Left cardiac atrium (tissue), 4 donors: ENCODE measurements at regions of chr16 and their contacts with region 1.

Region 1: DNA sequence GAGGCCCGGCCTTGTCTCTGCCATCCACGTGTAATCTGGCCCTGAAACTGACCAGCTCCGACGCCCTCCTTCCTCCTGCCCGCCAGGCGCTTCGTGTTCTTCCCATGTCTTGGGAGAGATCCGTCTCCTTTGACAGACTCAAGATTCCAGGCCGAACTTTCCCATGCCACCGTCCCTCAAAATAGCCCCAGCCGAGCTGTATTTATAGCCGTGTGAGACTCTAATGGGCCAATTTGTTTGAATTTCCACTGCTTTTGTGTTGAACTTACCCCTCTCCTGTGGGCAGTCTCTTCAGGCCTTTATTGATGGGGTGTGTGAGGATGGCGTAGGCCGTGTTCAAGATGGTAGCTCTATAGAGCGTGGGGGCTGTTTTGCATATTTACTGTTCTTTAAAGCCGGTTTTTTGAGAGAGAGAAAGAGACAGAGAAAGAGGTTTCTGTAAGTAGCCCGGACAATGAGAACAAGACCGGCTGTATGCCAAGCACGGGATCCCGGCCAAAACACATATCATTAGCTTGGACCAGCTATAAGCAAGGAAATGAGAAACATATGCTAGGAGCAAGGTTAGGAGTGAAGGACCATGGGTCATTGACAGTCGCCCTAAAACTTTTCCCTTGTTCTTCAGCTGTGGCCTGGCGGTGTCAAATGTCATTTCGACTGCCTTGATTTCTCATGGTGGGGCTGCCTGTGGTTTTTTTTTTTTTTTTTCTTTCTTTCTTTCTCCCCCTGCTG is 124.5 kb upstream of the ZFHX3 start:
- DNase-seq: peak; percentile 80
- ATAC-seq: peak; percentile 81 to 85

Region 2: GRCh38 chr16:73068541-73069401 is 103.6 kb before region 1 on chr16:
- intact Hi-C with region 1: loop called in 1 of 2 experiments (anchors 10 kb)
- DNase-seq: peak; percentile 73
- ATAC-seq: peak; percentile 74 to 76

Region 3: GRCh38 chr16:73298562-73298961 is 126.2 kb after region 1 on chr16:
- intact Hi-C with region 1: no loop called
- DNase-seq: no peak
- ATAC-seq: peak in 1 of 2 donors; percentile 51